Natural killer cell (primary cell): ENCODE measurements at regions of chr19 and their contacts with region 1.

Region 1: DNA sequence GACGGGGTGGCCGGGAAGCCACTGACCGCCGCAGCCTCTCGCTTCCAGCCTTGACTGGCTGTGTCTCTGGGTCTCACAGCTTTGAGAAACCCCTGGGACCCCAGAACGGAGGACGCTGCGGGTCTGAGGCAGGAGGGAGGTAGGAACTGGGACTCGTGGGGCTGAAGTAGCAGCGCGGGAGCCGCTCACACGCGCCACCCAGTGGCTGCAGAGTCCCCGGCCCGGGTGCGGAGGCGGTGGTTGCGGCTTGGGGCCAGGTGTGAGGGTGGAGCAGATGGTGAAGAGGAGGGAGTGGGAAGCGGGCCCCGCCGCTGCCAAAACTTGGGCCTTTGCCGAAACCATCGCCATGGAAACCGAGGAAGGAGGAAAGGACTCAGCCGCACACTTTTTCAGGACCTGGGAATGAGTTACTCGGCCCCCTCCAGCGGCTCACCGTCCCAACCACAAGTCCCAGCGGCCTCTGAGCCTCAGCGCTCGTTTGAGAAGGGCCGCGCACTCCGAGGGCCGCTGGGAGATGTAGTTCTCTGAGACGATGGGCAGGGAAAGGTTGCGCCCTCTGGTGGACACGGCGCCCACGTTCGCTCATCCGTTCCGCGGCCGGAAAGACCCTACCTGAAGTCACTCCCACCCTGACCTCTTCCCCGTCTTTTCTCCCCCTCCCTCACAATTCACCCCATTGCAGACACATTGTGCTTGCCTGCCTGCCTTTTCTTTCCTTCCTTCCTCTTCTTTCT is 2.2 kb upstream of the SLC17A7 start:
- DNase-seq: peak; percentile 92 to 97
- ATAC-seq: peak; percentile 92 to 97 (median 93)
- H3K4me3 ChIP-seq: peak overlapping the region; percentile 52
- H3K4me3 Mint-ChIP-seq: peak overlapping the region; percentile 83
- H3K27ac ChIP-seq: peak overlapping the region; percentile 64
- H3K27ac Mint-ChIP-seq: peak overlapping the region; percentile 69 to 88
- H3K4me1 ChIP-seq: peaks cover 32% of the 10 kb centered on the region
- H3K4me1 Mint-ChIP-seq: peaks cover 22 to 48% of the 10 kb centered on the region in 2 donors
- H3K27me3 ChIP-seq: peaks cover 33% of the 10 kb centered on the region
- H3K27me3 Mint-ChIP-seq: peaks cover 35 to 36% of the 10 kb centered on the region in 2 donors
- CTCF ChIP-seq: peak; percentile 81

Region 2: GRCh38 chr19:49224856-49225255 is 218.7 kb before region 1 on chr19:
- intact Hi-C with region 1: loop called (anchors 1 kb)
- DNase-seq: peak in 1 of 2 donors; percentile 37
- ATAC-seq: peak in 1 of 3 donors; percentile 31
- H3K4me3 ChIP-seq: no peak overlapping the region
- H3K4me3 Mint-ChIP-seq: no peak overlapping the region
- H3K27ac ChIP-seq: no peak overlapping the region
- H3K27ac Mint-ChIP-seq: no peak overlapping the region
- H3K4me1 ChIP-seq: no peaks in the 10 kb centered on the region
- H3K4me1 Mint-ChIP-seq: peaks cover 7 to 8% of the 10 kb centered on the region in 2 donors
- H3K27me3 ChIP-seq: no peaks in the 10 kb centered on the region
- H3K27me3 Mint-ChIP-seq: peaks cover 0 to 9% of the 10 kb centered on the region in 2 donors
- CTCF ChIP-seq: no peak

Region 3: GRCh38 chr19:49271080-49271762 is 172.3 kb before region 1 on chr19:
- intact Hi-C with region 1: loop called (anchors 1 kb)
- DNase-seq: no peak
- ATAC-seq: no peak
- H3K4me3 ChIP-seq: no peak overlapping the region
- H3K4me3 Mint-ChIP-seq: no peak overlapping the region
- H3K27ac ChIP-seq: no peak overlapping the region
- H3K27ac Mint-ChIP-seq: no peak overlapping the region
- H3K4me1 ChIP-seq: no peaks in the 10 kb centered on the region
- H3K4me1 Mint-ChIP-seq: no peaks in the 10 kb centered on the region
- H3K27me3 ChIP-seq: no peaks in the 10 kb centered on the region
- H3K27me3 Mint-ChIP-seq: peaks cover 22 to 33% of the 10 kb centered on the region in 2 donors
- CTCF ChIP-seq: no peak

Region 4: GRCh38 chr19:49391581-49392399 is 51.7 kb before region 1 on chr19:
- intact Hi-C with region 1: loop called (anchors 1 kb)
- DNase-seq: peak; percentile 57 to 91
- ATAC-seq: peak; percentile 72 to 79 (median 77)
- H3K4me3 ChIP-seq: no peak overlapping the region
- H3K4me3 Mint-ChIP-seq: no peak overlapping the region
- H3K27ac ChIP-seq: peak overlapping the region; percentile 26
- H3K27ac Mint-ChIP-seq: peak overlapping the region in 1 of 2 donors; percentile 23
- H3K4me1 ChIP-seq: peaks cover 37% of the 10 kb centered on the region
- H3K4me1 Mint-ChIP-seq: peaks cover 11 to 26% of the 10 kb centered on the region in 2 donors
- H3K27me3 ChIP-seq: no peaks in the 10 kb centered on the region
- H3K27me3 Mint-ChIP-seq: peaks cover 0 to 7% of the 10 kb centered on the region in 2 donors
- CTCF ChIP-seq: peak; percentile 85

Region 5: DNA sequence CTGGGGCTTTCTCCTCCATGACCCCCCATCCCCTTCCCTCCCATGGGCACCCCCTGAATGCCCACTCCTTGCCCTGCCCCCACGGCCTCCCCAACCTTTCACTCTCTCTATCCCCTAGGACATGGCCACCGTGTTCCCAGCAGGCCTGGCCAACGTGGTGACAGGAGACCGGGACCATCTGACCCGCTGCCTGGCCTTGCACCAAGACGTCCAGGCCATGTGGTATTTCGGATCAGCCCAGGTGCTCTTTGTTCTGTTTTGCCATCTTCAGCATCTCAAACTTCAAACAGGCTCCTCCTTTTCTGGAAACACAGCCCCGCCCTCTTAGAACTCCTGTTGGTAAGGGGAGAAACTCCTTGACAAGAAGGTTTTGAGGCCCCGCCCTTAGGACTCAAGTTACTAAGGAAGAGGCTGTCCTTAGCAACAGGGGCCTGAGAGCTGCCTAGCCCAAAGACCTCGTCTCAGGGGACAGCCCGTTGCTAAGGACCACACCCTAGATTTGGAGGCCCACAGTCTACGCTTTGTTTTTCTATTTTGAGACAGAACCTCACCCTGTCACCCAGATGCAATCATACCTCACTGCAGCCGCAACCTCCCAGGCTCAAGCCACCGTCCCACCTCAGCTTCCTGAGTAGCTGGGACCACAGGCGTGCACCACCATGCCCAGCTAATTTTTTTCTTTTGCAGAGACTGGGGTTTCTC is 25.4 kb after region 1 on chr19:
- intact Hi-C with region 1: loop called (anchors 1 kb)
- DNase-seq: peak; percentile 81 to 97
- ATAC-seq: peak; percentile 64 to 87 (median 72)
- H3K4me3 ChIP-seq: no peak overlapping the region
- H3K4me3 Mint-ChIP-seq: peak overlapping the region; percentile 86
- H3K27ac ChIP-seq: peak overlapping the region; percentile 97
- H3K27ac Mint-ChIP-seq: peak overlapping the region; percentile 92 to 97
- H3K4me1 ChIP-seq: peaks cover 60% of the 10 kb centered on the region
- H3K4me1 Mint-ChIP-seq: peaks cover 21 to 37% of the 10 kb centered on the region in 2 donors
- H3K27me3 ChIP-seq: no peaks in the 10 kb centered on the region
- H3K27me3 Mint-ChIP-seq: no peaks in the 10 kb centered on the region
- CTCF ChIP-seq: no peak